ENCODE measurements at regions of chr11 and their contacts with region 1.

Region 1: DNA sequence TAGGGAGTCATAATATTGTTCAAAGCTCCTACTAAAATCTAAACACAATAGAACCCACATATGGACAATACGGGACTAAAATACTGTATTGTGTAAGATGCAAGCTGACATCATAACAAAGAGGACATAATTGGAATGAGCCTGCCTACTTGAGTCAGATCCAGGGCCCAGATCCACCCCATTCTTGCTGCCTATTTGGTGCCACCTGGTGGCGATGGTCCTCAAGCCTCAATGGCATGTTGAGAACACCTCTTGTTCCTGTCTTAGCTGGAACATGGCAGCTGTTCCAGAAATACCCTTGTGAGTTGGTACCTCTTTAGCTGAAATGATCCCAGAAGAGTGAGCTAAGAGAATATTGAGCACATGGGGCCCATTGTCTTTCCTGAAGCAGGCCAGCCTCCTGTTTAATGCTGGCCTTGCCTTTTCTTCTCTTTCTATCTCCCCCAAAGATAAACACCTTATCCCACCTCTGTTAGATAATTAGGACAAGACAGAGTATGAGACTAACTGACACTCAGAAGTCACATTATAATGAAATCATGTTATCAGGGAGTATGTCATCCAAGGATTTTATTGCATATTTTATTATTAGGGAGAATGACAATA is 680.9 kb upstream of the ANO5 start:
- DNase-seq: peak; percentile 71 to 90
- H3K4me3 ChIP-seq: no peak overlapping the region
- H3K27ac ChIP-seq: no peak overlapping the region
- H3K4me1 ChIP-seq: no peaks in the 10 kb centered on the region
- H3K27me3 ChIP-seq: no peaks in the 10 kb centered on the region
- CTCF ChIP-seq: peak; percentile 78 to 92 (median 82)
- EP300 ChIP-seq: no peak
- POLR2A ChIP-seq: no peak
- RAD21 ChIP-seq: peak; percentile 91 to 92

Region 2: GRCh38 chr11:20647976-20648565 is 863.9 kb before region 1 on chr11:
- CTCF ChIA-PET with region 1: interaction called, 19 read pairs
- POLR2A ChIA-PET with region 1: no interaction called
- DNase-seq: peak in 1 of 2 experiments; percentile 79
- H3K4me3 ChIP-seq: no peak overlapping the region
- H3K27ac ChIP-seq: no peak overlapping the region
- H3K4me1 ChIP-seq: peaks cover 0 to 5% (median 2%) of the 10 kb centered on the region in 4 experiments; a peak in 2 of 7 replicates
- H3K27me3 ChIP-seq: no peaks in the 10 kb centered on the region
- CTCF ChIP-seq: peak; percentile 4 to 88 (median 79)
- EP300 ChIP-seq: no peak
- POLR2A ChIP-seq: no peak
- RAD21 ChIP-seq: peak; percentile 90 to 96

Region 3: GRCh38 chr11:20873054-20873453 is 638.9 kb before region 1 on chr11:
- CTCF ChIA-PET with region 1: interaction called, 11 read pairs
- POLR2A ChIA-PET with region 1: no interaction called
- DNase-seq: peak; percentile 41 to 66
- H3K4me3 ChIP-seq: no peak overlapping the region
- H3K27ac ChIP-seq: no peak overlapping the region
- H3K4me1 ChIP-seq: peaks cover 0 to 3% (median 1%) of the 10 kb centered on the region in 4 experiments; a peak in 2 of 7 replicates
- H3K27me3 ChIP-seq: no peaks in the 10 kb centered on the region
- CTCF ChIP-seq: peak; percentile 52 to 91 (median 83)
- EP300 ChIP-seq: no peak
- POLR2A ChIP-seq: no peak
- RAD21 ChIP-seq: peak; percentile 79 to 85

Region 4: DNA sequence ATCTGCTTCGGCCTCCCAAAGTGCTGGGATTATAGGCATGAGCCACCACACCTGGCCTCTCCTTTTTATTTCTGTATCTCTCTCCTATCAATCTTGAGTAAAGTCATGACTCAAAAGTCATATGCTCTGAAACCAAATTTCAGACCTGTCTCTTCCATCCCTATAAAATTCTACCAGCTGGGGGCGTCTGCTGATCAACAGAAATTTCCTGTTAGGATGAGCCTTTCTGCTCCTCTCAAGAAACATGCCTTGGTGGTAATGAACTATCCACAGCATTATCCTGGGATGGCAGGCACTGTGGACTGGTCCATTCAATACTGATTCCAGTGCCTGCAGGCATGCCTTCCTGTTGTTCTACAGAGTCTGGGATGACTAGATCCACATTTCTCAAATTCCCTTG is 369.9 kb before region 1 on chr11:
- CTCF ChIA-PET with region 1: interaction called, 35 read pairs
- POLR2A ChIA-PET with region 1: no interaction called
- DNase-seq: peak in 1 of 2 experiments; percentile 56
- H3K4me3 ChIP-seq: no peak overlapping the region
- H3K27ac ChIP-seq: no peak overlapping the region
- H3K4me1 ChIP-seq: peaks cover 0 to 6% (median 2%) of the 10 kb centered on the region in 4 experiments; a peak in 3 of 7 replicates
- H3K27me3 ChIP-seq: no peaks in the 10 kb centered on the region
- CTCF ChIP-seq: peak in 2 of 3 experiments; percentile 53 to 56; a peak in 3 of 4 replicates
- EP300 ChIP-seq: no peak
- POLR2A ChIP-seq: no peak
- RAD21 ChIP-seq: peak; percentile 77 to 81

Region 5: GRCh38 chr11:21323617-21324016 is 188.3 kb before region 1 on chr11:
- CTCF ChIA-PET with region 1: interaction called, 10 read pairs
- POLR2A ChIA-PET with region 1: no interaction called
- DNase-seq: no peak
- H3K4me3 ChIP-seq: no peak overlapping the region
- H3K27ac ChIP-seq: no peak overlapping the region
- H3K4me1 ChIP-seq: peaks cover 0 to 1% (median 0%) of the 10 kb centered on the region in 4 experiments; a peak in 1 of 7 replicates
- H3K27me3 ChIP-seq: no peaks in the 10 kb centered on the region
- CTCF ChIP-seq: peak in 2 of 3 experiments; percentile 48 to 58; a peak in 3 of 4 replicates
- EP300 ChIP-seq: no peak
- POLR2A ChIP-seq: no peak
- RAD21 ChIP-seq: peak; percentile 69 to 70

Region 6: GRCh38 chr11:21472261-21472660 is 39.7 kb before region 1 on chr11:
- CTCF ChIA-PET with region 1: interaction called, 13 read pairs
- POLR2A ChIA-PET with region 1: no interaction called
- DNase-seq: no peak
- H3K4me3 ChIP-seq: no peak overlapping the region
- H3K27ac ChIP-seq: no peak overlapping the region
- H3K4me1 ChIP-seq: peaks cover 5 to 7% (median 6%) of the 10 kb centered on the region in 4 experiments; a peak in 3 of 7 replicates
- H3K27me3 ChIP-seq: no peaks in the 10 kb centered on the region
- CTCF ChIP-seq: no peak
- EP300 ChIP-seq: no peak
- POLR2A ChIP-seq: no peak
- RAD21 ChIP-seq: no peak

Region 7: GRCh38 chr11:21501245-21501644 is 10.7 kb before region 1 on chr11:
- CTCF ChIA-PET with region 1: interaction called, 63 read pairs
- POLR2A ChIA-PET with region 1: no interaction called
- DNase-seq: no peak
- H3K4me3 ChIP-seq: no peak overlapping the region
- H3K27ac ChIP-seq: no peak overlapping the region
- H3K4me1 ChIP-seq: no peaks in the 10 kb centered on the region
- H3K27me3 ChIP-seq: no peaks in the 10 kb centered on the region
- CTCF ChIP-seq: no peak
- EP300 ChIP-seq: no peak
- POLR2A ChIP-seq: no peak
- RAD21 ChIP-seq: no peak

Region 8: DNA sequence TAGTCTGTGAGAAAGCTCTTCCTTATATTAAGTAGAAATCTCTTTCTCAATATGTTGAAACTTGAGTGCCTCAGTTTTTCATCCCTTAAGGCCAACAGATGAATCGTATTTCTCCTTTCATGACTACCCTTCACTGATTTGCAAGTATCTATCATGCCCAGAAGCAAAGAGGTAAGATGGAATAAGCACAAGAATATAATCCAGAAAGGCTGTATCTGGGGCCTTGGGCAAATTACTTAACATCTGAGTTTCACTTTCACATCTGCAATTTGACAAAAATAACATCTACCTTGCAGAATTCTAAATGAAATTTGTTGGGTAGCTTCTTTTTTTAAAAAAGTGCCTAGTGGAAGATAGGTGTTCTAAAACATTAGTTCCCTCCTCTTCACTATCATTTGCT is 128.6 kb after region 1 on chr11:
- CTCF ChIA-PET with region 1: no interaction called
- POLR2A ChIA-PET with region 1: no interaction called
- DNase-seq: no peak
- H3K4me3 ChIP-seq: no peak overlapping the region
- H3K27ac ChIP-seq: no peak overlapping the region
- H3K4me1 ChIP-seq: no peaks in the 10 kb centered on the region
- H3K27me3 ChIP-seq: no peaks in the 10 kb centered on the region
- CTCF ChIP-seq: no peak
- EP300 ChIP-seq: no peak
- POLR2A ChIP-seq: no peak
- RAD21 ChIP-seq: no peak

Measured in H1 (cell line).